ENCODE measurements at regions of chr1 and their contacts with region 1.

Region 1: GRCh38 chr1:29181413-29182225 is at the start of gene SRSF4:
- DNase-seq: peak; percentile 100
- ATAC-seq: peak; percentile 98
- H3K4me3 ChIP-seq: peak within 1 kb of the TSS; percentile 69 to 93
- H3K27ac ChIP-seq: peak within 1 kb of the TSS; percentile 72 to 98
- H3K4me1 ChIP-seq: peaks cover 2 to 4% of the 10 kb centered on the region in 2 donors
- H3K27me3 ChIP-seq: no peaks in the 10 kb centered on the region
- total RNA-seq, gene SRSF4: 85.0 to 85.6 TPM

Region 2: GRCh38 chr1:28642847-28643635 is 538.6 kb before region 1 on chr1 and contains the start of gene TAF12:
- intact Hi-C with region 1: loop called in 1 of 2 experiments (anchors 5 kb)
- DNase-seq: peak; percentile 94 to 96
- ATAC-seq: peak; percentile 98
- H3K4me3 ChIP-seq: peak within 1 kb of the TSS; percentile 56 to 92
- H3K27ac ChIP-seq: peak within 1 kb of the TSS; percentile 74 to 94
- H3K4me1 ChIP-seq: no peaks in the 10 kb centered on the region
- H3K27me3 ChIP-seq: no peaks in the 10 kb centered on the region
- total RNA-seq, gene TAF12: 14.6 to 17.1 TPM

Region 3: GRCh38 chr1:29043274-29043965 is 138.2 kb before region 1 on chr1:
- intact Hi-C with region 1: no loop called
- DNase-seq: no peak
- ATAC-seq: no peak
- H3K4me3 ChIP-seq: no peak overlapping the region
- H3K27ac ChIP-seq: no peak overlapping the region
- H3K4me1 ChIP-seq: no peaks in the 10 kb centered on the region
- H3K27me3 ChIP-seq: no peaks in the 10 kb centered on the region

Region 4: DNA sequence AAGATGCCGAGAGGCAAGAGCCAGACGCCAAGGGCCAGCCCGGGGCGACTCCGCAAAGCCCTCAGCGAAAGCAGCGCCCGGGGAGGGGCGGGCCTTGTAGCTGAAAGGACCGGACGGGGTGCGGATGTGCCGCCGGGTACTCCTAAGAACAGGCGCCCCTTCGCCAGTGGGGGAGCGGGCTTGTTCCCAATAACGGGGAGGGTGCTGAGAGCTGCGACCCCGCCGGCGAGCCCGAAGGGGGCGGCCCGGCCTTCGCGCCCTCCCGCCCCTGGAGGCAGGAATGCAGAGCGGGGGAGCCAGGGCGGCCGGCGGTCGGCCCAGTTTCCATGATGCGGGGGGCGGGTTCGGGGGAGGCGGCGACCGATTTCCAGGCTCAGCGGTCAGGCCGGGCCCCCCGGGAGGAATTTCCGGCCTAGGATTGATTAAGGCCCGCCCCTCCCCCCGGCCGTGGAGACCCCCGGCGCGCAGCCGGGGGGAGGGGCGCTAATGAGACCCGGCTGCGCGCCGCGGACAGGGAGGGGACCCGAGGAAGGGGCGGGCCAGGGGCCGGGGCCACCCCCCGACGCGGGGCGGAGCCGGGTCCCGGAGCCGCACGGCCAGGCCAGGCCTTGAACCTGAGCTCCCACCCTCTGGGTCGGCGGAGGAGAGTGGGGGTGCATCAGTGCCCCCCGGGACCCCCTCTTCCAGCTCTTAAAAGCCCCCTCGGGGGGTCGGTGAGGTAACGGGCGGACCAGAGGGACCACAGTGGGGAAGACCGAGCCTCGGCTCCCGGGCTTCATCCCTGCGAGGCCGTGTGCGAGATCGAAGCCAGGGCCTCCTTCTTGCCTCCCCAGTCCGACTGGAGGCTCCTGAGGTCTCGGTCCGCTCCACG is 57.0 kb before region 1 on chr1:
- intact Hi-C with region 1: loop called (anchors 2 to 5 kb)
- DNase-seq: peak; percentile 89 to 96
- ATAC-seq: peak; percentile 89
- H3K4me3 ChIP-seq: peak overlapping the region; percentile 56 to 61
- H3K27ac ChIP-seq: peak overlapping the region; percentile 89 to 99
- H3K4me1 ChIP-seq: no peaks in the 10 kb centered on the region
- H3K27me3 ChIP-seq: no peaks in the 10 kb centered on the region

Measured in aorta (tissue), 5 donors.